Tibial artery (tissue), 4 donors: ENCODE measurements at regions of chr6 and their contacts with region 1.

Region 1: GRCh38 chr6:52995913-52996645 is 995 bp upstream of the GSTA4 start:
- DNase-seq: peak; percentile 41 to 70
- H3K4me3 ChIP-seq: peak overlapping the region; percentile 68 to 69
- H3K27ac ChIP-seq: peak overlapping the region; percentile 92 to 94
- H3K4me1 ChIP-seq: peaks cover 0 to 28% (median 16%) of the 10 kb centered on the region in 4 donors
- H3K27me3 ChIP-seq: no peaks in the 10 kb centered on the region
- CTCF ChIP-seq: no peak

Region 2: DNA sequence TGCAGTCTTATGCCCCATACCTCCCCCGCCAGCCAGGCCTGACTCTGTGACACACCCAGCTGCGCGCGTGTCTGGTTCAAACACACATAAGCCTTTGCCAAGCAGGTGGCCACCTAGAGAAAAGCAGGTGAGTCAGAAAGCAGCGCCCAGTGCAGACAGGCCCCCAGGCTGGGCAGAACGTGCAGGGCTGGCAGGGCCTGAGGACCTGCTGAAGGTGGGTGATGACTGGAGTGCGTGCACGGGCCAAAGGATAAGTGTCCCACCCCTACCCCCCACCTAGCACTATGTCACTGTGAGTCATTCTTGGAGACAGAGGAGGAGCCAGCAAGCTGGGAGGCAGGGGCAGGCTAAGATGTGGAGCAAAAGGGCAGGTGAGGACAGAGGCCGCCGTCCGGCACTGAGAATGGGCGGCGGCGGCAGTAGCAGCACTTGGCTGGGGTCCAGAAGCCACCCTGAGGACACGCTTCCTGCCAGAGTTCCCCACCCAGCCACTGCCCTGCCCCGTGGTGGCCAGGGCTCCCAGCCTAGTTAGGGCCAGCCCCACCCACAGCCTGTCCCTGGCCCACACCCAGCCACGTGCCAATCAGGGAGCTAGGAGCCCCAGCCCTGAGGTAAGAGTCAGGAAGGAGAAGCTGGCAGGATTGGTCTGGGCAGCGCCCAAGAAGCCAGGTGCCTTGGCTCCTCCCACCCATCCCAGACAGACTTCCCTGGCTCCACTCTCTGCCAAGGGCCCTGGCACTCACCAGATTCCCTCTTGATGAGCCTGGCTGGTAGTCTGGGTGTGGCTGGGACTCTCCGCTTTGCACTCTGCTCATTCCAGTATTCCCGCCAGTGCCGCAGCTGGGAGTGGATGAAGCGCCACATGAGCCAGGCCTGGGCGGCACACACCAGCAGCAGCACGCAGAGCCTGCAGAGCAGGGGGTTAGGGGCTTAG is 492.0 kb before region 1 on chr6:
- intact Hi-C with region 1: loop called (anchors 5 kb)
- DNase-seq: peak; percentile 92 to 98
- H3K4me3 ChIP-seq: peak overlapping the region in 1 of 2 donors; percentile 4
- H3K27ac ChIP-seq: peak overlapping the region; percentile 68 to 84
- H3K4me1 ChIP-seq: peaks cover 4 to 62% (median 52%) of the 10 kb centered on the region in 4 donors
- H3K27me3 ChIP-seq: no peaks in the 10 kb centered on the region
- CTCF ChIP-seq: peak in 1 of 2 experiments; percentile 8

Region 3: DNA sequence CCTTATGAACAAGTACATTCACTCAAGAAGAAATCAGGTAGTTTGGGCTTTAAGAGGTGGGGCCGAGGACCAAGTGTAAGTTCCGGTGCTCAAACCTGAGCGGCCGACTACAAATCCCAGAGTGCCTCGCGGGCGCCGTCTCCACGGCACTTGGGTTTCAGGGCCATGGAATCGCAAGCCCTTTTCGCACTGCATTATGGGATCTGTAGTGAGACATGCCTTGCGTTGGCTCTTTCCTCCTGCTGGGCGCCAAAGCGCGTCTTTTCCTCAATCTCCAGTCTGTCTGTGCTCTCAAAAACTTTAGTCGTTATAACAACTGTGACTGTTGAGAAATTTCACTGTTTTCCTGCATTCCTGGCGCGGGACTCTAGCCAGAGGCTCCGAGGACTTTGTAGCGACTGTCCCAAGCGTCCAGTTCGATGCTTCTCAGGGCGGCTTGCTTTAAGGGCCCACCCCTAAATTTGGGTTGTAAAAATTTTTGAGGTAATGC is 68.7 kb after region 1 on chr6:
- intact Hi-C with region 1: loop called (anchors 2 kb)
- DNase-seq: peak; percentile 98 to 99
- H3K4me3 ChIP-seq: peak overlapping the region; percentile 72 to 87
- H3K27ac ChIP-seq: peak overlapping the region; percentile 92 to 96
- H3K4me1 ChIP-seq: peaks cover 0 to 51% (median 30%) of the 10 kb centered on the region in 4 donors
- H3K27me3 ChIP-seq: no peaks in the 10 kb centered on the region
- CTCF ChIP-seq: no peak

Region 4: GRCh38 chr6:53686355-53686940 is 690.4 kb after region 1 on chr6:
- intact Hi-C with region 1: no loop called
- DNase-seq: no peak
- H3K4me3 ChIP-seq: no peak overlapping the region
- H3K27ac ChIP-seq: no peak overlapping the region
- H3K4me1 ChIP-seq: peaks cover 0 to 2% (median 0%) of the 10 kb centered on the region in 4 donors
- H3K27me3 ChIP-seq: no peaks in the 10 kb centered on the region
- CTCF ChIP-seq: no peak